ENCODE measurements at regions of chr11 and their contacts with region 1.

Region 1: DNA sequence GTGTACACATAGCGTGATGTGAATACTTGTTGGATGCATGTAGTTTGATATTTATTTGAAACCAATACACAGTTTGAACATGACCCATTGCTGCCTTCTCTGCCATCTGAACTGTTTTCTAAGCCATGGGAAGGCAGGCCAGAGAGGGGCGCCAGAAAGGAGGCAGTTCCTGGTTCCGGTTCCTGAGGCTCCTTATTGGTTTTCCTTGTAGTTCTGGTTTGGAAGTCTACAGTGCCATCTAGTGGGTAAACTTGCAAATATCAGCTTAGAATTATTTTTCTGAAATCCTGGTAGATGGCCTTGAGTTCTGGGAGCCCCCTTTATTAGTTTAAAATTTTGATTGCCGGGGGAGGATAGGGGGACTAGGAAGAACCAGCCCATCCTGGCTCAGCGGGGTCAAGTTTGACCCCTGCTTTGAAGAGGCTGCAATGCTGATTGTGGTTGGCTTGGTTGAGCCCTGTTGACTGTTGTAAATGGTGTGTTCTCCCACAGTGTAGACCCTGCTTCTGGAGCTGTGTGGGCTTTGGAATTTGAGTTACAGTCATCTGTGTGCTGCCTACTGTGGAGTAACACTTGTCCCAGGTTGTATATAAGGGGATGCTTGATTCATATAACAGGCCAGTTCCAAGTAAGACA is 48.4 kb downstream of the GRAMD1B start:
- DNase-seq: no peak
- H3K4me3 ChIP-seq: peak overlapping the region in 1 of 4 donors; percentile 15
- H3K27ac ChIP-seq: no peak overlapping the region
- H3K4me1 ChIP-seq: peaks cover 0 to 18% (median 4%) of the 10 kb centered on the region in 4 donors
- H3K27me3 ChIP-seq: no peaks in the 10 kb centered on the region
- CTCF ChIP-seq: peak; percentile 65 to 72 (median 71)
- EP300 ChIP-seq: no peak
- POLR2A ChIP-seq: no peak

Region 2: DNA sequence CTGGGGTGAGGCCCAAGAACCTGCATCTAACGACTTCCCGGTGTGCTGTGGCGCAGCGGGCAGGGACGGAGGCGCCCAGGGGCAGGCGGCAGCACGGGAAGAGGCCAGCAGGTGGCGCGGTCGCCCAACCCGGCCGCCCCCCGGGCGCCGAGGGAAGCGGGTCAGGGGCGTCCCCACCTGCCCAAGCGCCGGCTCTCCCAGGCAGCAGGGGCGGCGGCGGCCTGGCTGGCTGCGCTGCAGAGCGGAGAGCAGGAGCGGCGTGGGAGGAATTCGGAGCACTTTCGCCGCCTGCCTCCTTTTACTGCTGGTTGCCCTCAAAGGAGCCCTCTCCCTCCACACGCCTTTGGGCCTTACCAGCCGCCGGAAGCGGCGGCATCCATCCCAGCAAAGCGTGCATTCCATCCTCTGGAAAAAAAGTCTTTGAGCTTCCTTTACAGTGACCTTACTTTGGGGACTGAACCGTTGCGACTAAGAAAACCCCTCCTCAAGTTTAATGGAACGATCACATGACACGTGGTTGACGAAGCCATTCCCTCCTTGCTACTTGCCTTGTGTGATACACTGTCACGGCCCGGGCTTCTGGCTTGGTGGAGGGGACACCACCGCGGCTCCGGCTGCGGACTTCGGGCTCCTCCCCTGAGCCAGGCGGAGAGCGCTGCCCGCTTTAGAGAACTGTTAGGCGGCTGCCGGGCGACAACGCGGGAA is 176.6 kb before region 1 on chr11:
- intact Hi-C with region 1: loop called (anchors 1 kb)
- DNase-seq: no peak
- H3K4me3 ChIP-seq: peak overlapping the region; percentile 50 to 62 (median 53)
- H3K27ac ChIP-seq: no peak overlapping the region
- H3K4me1 ChIP-seq: peaks cover 8 to 16% (median 13%) of the 10 kb centered on the region in 4 donors
- H3K27me3 ChIP-seq: peaks cover 0 to 34% (median 0%) of the 10 kb centered on the region in 4 donors
- CTCF ChIP-seq: peak; percentile 77 to 96 (median 93)
- EP300 ChIP-seq: no peak
- POLR2A ChIP-seq: no peak

Region 3: DNA sequence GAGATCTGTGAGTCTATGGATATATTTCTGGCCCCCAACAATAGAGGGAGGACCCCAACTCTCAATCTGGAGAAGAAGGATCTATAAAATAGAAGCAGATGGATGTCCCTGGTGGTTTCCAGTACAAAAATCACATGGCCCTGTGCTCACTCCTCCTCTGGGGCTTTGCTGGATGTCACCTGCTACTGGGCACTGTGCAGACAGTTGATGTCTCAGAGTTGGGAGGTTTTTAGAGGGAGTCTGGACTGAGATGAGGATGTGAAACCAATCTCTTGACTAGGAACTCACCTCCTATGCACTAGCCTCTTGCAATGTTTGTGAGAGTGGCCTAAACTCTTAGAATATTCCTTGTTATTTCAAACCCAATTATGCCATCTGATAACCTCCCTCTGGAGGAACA is 68.7 kb after region 1 on chr11:
- intact Hi-C with region 1: no loop called
- DNase-seq: no peak
- H3K4me3 ChIP-seq: no peak overlapping the region
- H3K27ac ChIP-seq: no peak overlapping the region
- H3K4me1 ChIP-seq: peaks cover 0 to 11% (median 0%) of the 10 kb centered on the region in 4 donors
- H3K27me3 ChIP-seq: no peaks in the 10 kb centered on the region
- CTCF ChIP-seq: no peak
- EP300 ChIP-seq: no peak
- POLR2A ChIP-seq: no peak